Transverse colon (tissue), 4 donors: ENCODE measurements at regions of chr7 and their contacts with region 1.

Region 1: DNA sequence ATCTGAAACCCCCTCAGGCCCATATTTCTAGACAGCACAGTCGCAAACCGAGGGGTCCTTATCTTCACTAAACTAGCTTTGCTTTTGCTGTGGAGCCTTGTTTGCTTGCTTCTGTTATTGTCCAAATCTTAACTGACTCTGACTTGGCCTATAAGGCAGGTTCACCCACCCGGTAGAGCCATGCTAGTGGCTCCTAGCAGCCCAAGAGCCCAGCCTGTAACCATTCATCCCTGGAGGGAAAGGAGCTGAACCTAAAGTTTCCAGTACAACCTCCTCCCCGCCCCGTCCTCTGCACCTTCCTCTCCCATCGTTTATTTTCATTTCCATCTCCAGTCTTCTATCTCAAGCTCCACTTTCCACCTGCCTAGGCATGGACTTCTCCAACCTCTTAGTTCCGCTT is 345.7 kb downstream of the PTPRN2 start:
- DNase-seq: no peak
- H3K4me3 ChIP-seq: no peak overlapping the region
- H3K27ac ChIP-seq: no peak overlapping the region
- H3K4me1 ChIP-seq: no peaks in the 10 kb centered on the region
- H3K27me3 ChIP-seq: no peaks in the 10 kb centered on the region
- CTCF ChIP-seq: no peak
- EP300 ChIP-seq: no peak
- POLR2A ChIP-seq: no peak

Region 2: DNA sequence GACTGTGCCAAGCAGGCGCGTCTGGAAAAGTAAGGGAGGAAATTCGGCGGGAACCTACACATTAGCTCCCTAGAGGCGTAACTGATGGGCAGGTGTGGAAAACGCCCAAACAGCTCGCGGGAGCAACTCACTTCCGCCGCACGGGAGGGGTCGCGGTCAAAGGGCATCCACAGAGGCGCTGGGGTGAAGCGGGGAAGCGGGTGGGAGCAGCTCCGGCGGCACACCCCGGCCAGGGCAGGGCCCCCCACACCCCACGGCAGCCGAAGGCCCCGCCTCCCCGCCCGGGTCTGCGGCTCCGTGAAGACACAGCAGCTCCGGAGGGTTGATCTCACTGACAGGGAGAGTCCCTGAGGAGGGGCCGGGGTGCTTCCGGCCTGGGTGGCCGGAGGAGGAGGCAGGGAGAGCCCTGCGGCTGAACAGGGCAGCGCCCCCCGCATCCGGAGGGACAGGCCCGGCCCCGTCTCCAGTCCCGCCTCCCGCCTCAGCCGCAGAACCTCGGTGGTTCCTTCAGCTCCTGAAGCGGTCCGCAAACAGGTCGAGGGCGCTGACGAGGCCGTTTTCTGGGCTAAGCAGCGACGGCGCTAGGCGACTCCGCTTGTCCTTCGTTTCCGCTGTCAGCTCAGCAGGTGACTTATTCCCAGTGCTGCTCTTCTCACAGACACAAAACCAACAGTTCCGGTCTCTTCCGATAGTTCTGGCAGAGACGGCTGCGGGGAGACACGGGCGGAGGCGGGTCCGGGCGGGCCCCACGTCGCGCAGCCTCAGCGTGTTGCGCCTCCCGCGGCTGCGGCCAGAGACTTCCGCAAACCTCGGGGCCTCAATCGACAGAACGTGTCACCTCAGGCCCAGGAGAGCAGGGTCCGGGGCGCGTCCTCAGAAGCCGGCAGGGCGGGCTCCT is 629.0 kb before region 1 on chr7:
- in situ Hi-C with region 1: no loop called
- intact Hi-C with region 1: no loop called
- DNase-seq: peak; percentile 43
- H3K4me3 ChIP-seq: peak overlapping the region; percentile 27 to 52 (median 40)
- H3K27ac ChIP-seq: peak overlapping the region in 1 of 4 donors; percentile 21
- H3K4me1 ChIP-seq: peaks cover 0 to 16% (median 0%) of the 10 kb centered on the region in 4 donors
- H3K27me3 ChIP-seq: no peaks in the 10 kb centered on the region
- CTCF ChIP-seq: no peak
- EP300 ChIP-seq: no peak
- POLR2A ChIP-seq: no peak

Region 3: GRCh38 chr7:158227258-158227984 is 14.5 kb before region 1 on chr7:
- in situ Hi-C with region 1: no loop called
- intact Hi-C with region 1: loop called (anchors 1 kb)
- DNase-seq: no peak
- H3K4me3 ChIP-seq: no peak overlapping the region
- H3K27ac ChIP-seq: no peak overlapping the region
- H3K4me1 ChIP-seq: no peaks in the 10 kb centered on the region
- H3K27me3 ChIP-seq: no peaks in the 10 kb centered on the region
- CTCF ChIP-seq: no peak
- EP300 ChIP-seq: no peak
- POLR2A ChIP-seq: no peak